GM10248 (cell line): ENCODE measurements at regions of chr5 and their contacts with region 1.

Region 1: GRCh38 chr5:173972925-173973615 is 15.9 kb upstream of the C5orf47 start:
- DNase-seq: peak; percentile 87
- CTCF ChIP-seq: peak; percentile 72

Region 2: GRCh38 chr5:173625696-173626504 is 347.2 kb before region 1 on chr5:
- CTCF ChIA-PET with region 1: interaction called, 247 read pairs
- POLR2A ChIA-PET with region 1: no interaction called
- DNase-seq: peak; percentile 52
- CTCF ChIP-seq: peak; percentile 60

Region 3: DNA sequence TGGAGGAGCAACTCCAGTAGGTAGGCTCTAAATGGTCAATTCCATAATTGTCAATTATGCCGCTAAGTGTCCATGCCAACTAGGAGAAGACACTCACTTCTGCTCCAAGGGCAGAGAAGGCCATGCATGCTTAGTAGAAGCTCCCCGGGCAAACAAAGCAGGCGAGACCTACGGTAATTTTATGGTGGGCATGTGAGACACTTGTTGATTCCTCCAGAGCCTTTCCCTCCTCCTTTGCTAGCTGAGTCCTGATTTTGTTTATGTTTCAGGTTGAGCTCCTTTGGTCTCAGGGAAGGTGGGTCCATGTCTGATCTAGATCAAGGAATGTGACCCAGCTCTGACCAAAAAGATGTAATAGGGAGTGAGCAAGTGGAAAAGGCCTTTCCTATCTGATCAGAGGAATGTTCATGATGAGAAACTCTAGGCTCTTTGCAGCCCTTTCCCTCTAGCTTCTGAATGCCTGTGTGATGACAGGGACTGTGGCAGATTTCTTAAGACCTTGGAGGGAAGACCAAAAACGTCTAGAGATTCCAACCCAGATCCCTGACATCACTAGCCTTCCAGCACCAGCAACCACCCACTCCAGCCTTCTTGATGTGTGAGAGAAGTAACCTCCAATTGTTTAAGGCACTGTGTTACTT is 92.6 kb before region 1 on chr5:
- CTCF ChIA-PET with region 1: no interaction called
- POLR2A ChIA-PET with region 1: no interaction called
- DNase-seq: no peak
- CTCF ChIP-seq: no peak

Region 4: GRCh38 chr5:173932695-173933139 is 40.4 kb before region 1 on chr5:
- CTCF ChIA-PET with region 1: interaction called, 29 read pairs
- POLR2A ChIA-PET with region 1: no interaction called
- DNase-seq: no peak
- CTCF ChIP-seq: no peak

Region 5: DNA sequence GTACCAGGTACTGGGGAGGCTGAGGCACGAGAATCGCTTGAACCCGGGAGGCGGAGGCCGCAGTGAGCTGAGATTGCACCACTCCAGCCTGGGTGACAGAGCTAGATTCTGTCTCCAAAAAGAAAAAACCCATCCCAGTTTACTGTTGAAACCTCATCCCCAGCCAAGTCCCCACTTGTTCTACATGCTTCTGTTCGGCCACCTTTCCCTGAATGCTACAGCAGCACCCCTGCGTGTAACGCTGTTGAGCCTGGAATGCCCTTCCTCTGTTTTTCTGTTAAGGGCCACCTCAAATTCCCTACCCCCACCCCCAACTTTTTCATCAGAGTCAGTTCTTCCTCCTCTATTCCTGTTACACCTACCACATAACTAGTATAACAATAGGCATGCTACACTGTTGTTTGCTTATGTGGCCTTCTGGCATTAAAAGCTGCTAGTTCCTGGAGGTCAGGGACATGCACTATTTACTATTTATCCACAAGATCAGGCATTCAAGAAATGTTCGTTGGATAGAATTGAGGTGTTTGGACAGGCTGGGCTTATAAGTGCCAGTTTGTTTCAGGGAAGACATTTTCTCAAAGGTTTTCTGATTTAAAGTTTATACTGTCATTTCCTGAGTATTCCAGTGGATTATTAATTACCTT is 31.2 kb before region 1 on chr5:
- CTCF ChIA-PET with region 1: interaction called, 13 read pairs
- POLR2A ChIA-PET with region 1: no interaction called
- DNase-seq: no peak
- CTCF ChIP-seq: no peak

Region 6: GRCh38 chr5:173988554-173989431 is 15.7 kb after region 1 on chr5 and contains the start of gene C5orf47:
- CTCF ChIA-PET with region 1: interaction called, 13 read pairs
- POLR2A ChIA-PET with region 1: no interaction called
- DNase-seq: no peak
- CTCF ChIP-seq: no peak

Region 7: GRCh38 chr5:174472956-174473355 is 499.9 kb after region 1 on chr5:
- CTCF ChIA-PET with region 1: no interaction called
- POLR2A ChIA-PET with region 1: no interaction called
- DNase-seq: no peak
- CTCF ChIP-seq: no peak